ENCODE measurements at regions of chr16 and their contacts with region 1.

Region 1: DNA sequence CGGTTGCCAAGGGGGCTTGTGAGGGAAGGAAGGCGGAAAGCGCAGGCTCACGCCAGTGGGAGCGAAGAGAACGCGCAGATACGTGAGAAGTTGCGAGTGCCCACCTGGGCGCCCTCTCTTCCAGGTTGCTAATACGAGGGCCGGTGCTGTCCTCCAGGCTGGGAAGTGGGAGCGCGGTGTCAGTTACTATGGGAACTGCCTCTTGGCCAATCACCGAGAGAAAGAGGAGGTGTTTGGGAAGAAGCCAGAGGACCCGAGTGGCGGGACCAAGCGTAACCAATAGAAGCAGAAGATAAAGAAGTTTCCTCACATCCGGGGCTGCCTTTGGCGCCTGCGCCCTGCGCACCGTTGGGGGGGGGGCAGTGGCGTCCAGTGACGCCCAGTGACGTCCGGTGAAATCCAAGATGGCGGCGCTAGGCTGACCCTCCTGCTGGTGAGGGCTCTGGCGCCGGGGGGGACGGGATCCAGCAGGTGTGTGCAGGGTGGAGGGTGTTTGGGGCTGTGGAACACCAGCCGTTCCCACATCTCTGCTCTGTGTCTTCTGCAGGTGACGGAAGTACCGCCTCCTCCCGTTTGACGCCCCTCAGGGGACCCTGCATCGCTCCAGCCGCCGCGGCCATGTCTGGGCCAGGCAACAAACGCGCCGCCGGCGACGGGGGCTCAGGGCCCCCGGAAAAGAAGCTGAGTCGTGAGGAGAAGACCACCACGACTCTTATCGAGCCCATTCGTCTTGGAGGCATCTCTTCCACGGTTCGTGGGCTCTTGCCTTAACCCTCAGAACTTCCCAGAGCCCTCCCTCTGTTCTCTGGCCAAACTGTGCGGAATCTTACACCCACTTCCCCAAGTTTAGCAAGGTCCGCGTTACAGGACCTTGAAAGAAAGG is at the starts of genes CFAP119 and RNF40:
- DNase-seq: peak; percentile 98
- H3K4me3 ChIP-seq: peak within 1 kb of the TSS; percentile 56 to 80
- H3K27ac ChIP-seq: peak within 1 kb of the TSS; percentile 86 to 92
- H3K4me1 ChIP-seq: peaks cover 16% of the 10 kb centered on the region
- H3K27me3 ChIP-seq: no peaks in the 10 kb centered on the region
- CTCF ChIP-seq: peak in 2 of 4 experiments; percentile 10 to 25
- POLR2A ChIP-seq: peak; percentile 78
- total RNA-seq, gene CFAP119: 3.1 to 13.2 TPM
- total RNA-seq, gene RNF40: 89.9 to 113 TPM

Region 2: DNA sequence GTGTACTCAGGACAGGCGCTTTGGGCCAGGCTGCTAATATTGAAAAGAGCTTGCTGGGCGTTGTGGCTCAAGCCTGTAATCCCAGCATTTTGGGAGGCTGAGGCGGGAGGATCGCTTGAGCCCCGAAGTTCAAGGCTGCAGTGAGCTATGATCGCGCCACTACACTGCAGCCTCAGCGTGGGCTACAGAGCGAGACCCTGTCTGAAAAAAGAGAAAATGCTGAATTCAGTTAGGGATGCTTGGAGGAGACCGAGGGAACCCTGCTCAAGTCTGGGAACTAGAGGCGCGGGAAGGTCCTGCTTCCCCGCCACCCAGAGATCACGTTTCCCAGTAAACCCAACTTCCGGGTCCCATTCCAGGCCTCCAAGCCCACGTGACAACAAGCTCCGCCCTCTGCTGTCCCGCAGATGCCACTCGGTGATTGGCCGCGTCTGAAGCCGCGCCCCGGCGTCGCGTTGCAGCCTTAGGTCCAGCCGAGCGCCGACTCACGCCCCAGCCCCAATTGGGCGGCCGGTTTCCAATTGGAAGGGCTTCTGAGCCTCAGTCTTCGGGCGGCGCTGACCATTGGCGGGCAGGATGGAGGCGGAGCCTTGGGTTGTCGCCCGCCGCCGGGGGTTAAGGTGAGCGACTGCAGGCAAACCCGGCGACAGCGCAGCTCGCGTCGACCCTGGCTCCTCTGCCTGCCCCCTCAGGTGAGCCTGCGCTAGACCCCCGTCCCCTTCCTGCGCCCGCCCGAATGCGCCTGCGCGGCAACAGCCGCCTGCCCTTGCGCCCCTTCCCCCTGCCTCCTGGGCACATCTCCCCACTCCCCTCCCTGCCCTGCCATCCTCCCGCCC is 14.2 kb before region 1 on chr16 and contains the start of gene PHKG2:
- intact Hi-C with region 1: loop called (anchors 2 kb)
- DNase-seq: peak; percentile 100
- H3K4me3 ChIP-seq: peak within 1 kb of the TSS; percentile 86 to 95
- H3K27ac ChIP-seq: peak within 1 kb of the TSS; percentile 76 to 78
- H3K4me1 ChIP-seq: no peaks in the 10 kb centered on the region
- H3K27me3 ChIP-seq: no peaks in the 10 kb centered on the region
- CTCF ChIP-seq: peak in 2 of 4 experiments; percentile 28 to 30
- POLR2A ChIP-seq: peak; percentile 67
- total RNA-seq, gene PHKG2: 37.2 to 45.2 TPM

Region 3: DNA sequence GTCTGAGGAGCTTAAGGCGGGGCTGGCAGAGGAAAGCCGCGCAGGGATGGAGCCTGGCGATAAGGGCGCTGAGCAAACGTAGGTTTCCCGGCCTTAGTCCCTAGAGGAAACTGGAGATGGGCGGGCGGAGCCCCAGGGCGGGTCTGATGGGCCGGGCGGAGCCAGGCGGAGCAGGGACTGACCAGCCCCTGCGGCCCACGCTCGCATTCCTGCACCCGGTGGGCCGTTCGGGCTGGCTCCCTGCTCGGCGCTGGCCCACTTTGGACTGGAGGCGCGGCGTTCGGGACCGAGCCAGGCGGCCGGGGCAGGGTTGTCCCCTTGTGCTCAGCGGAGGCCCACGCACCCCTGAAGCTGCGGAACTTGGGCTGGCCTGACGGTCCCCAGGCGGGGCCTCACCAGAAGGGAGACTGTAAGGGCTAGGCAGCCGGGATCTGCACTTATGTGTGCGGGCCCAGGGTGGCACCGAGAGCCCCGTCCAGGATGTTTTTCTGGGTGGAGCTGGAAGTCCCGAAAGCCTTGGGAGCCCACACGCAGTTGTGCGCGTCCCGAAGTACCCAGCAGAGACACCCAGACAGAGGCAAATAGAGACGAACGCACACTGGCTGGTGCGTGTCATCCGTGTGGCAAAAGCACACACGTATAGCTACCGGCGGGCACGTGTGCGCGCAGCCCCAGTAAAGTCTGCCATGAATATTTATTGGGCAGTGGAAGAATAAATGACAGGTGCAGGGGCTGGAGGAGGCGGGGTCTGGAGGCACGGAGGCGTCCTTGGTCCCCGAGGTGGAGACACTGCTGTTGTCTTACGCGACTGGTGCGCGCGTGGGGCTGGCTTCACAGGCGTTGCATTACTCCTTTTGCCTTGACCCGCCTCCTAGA is 453.4 kb after region 1 on chr16:
- intact Hi-C with region 1: no loop called
- DNase-seq: peak; percentile 37
- H3K4me3 ChIP-seq: peak overlapping the region; percentile 28 to 39
- H3K27ac ChIP-seq: no peak overlapping the region
- H3K4me1 ChIP-seq: peaks cover 15% of the 10 kb centered on the region
- H3K27me3 ChIP-seq: no peaks in the 10 kb centered on the region
- CTCF ChIP-seq: no peak
- POLR2A ChIP-seq: no peak

Measured in prostate gland (tissue), 2 donors.